Activated B cell treated with CpG ODN at 0.5 μM for 24 hours (primary cell): ENCODE measurements at regions of chr7 and their contacts with region 1.

Region 1: GRCh38 chr7:73851410-73852234 is 9.3 kb upstream of the METTL27 start:
- DNase-seq: no peak
- ATAC-seq: peak; percentile 60
- H3K4me3 Mint-ChIP-seq: no peak overlapping the region
- H3K27ac Mint-ChIP-seq: peak overlapping the region; percentile 20
- H3K4me1 Mint-ChIP-seq: peaks cover 12% of the 10 kb centered on the region
- H3K27me3 Mint-ChIP-seq: peaks cover 19% of the 10 kb centered on the region
- CTCF ChIP-seq: no peak

Region 2: DNA sequence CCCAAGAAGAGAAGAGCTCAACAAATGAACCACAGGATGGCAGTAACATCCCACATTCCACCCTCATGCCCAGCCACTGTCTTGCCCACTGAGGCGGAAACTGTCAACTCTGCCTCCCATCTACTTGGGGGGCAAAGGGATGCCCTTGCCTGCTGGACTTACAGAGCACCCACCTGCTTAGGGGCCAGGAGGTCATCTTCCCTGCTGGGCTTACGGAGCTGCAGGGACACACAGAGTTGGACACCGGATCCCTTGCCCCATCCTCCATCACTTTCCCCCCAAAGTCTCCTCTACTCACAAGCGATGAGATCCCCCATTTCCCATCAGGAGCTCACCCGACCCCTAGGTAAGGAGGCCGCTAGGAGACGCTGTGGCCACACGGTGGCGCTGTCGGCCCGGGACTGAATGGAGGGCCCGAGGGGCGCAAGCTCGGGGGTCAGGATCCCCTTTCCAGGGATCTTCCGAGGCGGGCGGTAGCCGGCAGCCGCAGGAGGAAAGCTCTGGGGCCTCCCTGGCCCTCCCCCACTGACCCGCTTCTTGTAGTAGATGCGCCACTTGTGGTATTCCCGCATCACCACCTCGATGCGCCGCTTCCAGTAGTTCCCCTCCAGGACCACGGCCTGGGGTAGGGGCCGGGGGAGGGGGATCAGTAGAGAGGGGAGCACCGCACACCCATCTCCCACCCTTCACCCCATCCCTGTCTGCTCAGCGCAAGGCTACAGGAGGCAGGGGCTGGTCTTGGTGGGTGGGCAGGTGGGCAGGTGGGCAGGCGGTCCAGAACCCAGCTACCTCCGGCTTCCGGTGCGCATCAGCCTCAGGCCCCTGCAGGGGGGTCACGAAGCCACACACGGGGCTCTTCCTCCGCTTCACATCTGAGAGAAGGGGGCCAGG is 244.6 kb before region 1 on chr7:
- CTCF ChIA-PET with region 1: interaction called, 7 read pairs
- POLR2A ChIA-PET with region 1: no interaction called
- intact Hi-C with region 1: loop called (anchors 1 kb)
- DNase-seq: peak; percentile 66
- ATAC-seq: peak; percentile 67
- H3K4me3 Mint-ChIP-seq: no peak overlapping the region
- H3K27ac Mint-ChIP-seq: no peak overlapping the region
- H3K4me1 Mint-ChIP-seq: peaks cover 1% of the 10 kb centered on the region
- H3K27me3 Mint-ChIP-seq: peaks cover 39% of the 10 kb centered on the region
- CTCF ChIP-seq: no peak

Region 3: DNA sequence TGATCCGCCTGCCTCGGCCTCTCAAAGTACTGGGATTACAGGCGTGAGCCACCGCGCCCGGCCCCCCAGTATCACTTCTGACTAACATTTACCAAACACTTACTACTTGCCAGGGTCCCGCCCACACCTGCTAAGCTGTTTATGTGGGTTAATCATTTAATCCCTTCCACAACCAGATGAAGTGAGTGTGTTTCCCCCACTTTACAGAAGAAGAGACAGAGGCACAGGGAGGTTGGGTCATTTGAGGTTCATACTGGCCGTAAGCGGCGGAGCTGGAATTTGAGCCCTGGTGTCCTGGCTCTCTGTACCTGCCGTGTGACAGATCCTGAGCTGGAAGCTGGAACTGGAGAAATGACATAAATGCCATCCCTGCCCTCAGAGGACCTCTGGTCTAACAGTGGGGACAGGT is 199.1 kb before region 1 on chr7:
- CTCF ChIA-PET with region 1: no interaction called
- POLR2A ChIA-PET with region 1: no interaction called
- intact Hi-C with region 1: no loop called
- DNase-seq: no peak
- ATAC-seq: no peak
- H3K4me3 Mint-ChIP-seq: no peak overlapping the region
- H3K27ac Mint-ChIP-seq: no peak overlapping the region
- H3K4me1 Mint-ChIP-seq: peaks cover 7% of the 10 kb centered on the region
- H3K27me3 Mint-ChIP-seq: peaks cover 41% of the 10 kb centered on the region
- CTCF ChIP-seq: no peak

Region 4: GRCh38 chr7:73811760-73812168 is 39.9 kb before region 1 on chr7:
- CTCF ChIA-PET with region 1: interaction called, 13 read pairs
- POLR2A ChIA-PET with region 1: no interaction called
- intact Hi-C with region 1: loop called (anchors 1 kb)
- DNase-seq: no peak
- ATAC-seq: peak; percentile 77
- H3K4me3 Mint-ChIP-seq: no peak overlapping the region
- H3K27ac Mint-ChIP-seq: no peak overlapping the region
- H3K4me1 Mint-ChIP-seq: no peaks in the 10 kb centered on the region
- H3K27me3 Mint-ChIP-seq: peaks cover 18% of the 10 kb centered on the region
- CTCF ChIP-seq: no peak

Region 5: DNA sequence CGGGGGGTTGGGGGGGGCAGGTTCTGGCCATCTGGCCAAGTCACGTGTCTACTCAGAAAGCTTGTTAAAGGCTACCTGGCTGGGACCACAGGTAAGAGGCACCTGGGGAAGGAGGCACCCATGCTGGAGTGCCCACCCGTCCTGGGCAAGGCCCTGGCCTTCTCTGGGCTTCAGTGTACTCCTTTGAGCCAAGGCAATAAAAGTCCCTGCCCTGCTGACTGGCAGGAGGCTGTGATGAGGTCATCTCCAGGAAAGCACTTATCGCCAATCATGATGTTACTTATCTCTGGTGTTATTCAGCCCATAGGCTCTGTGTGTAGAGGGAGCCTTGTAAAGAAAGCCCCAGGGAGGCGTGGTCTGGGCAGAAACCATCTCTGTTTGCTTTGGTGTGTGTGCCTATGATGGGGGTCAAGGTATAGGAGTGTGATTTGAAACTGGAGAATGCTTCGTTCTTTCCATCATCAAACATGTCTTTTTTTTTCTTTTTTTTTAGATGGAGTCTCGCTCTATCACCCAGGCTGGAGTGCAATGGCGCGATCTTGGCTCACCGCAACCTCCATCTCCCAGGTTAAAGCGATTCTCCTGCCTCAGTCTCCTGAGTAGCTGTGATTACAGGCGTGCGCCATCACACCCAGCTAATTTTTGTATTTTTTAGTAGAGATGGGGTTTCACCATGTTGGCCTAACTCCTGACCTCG is 23.4 kb before region 1 on chr7:
- CTCF ChIA-PET with region 1: interaction called, 4 read pairs
- POLR2A ChIA-PET with region 1: no interaction called
- intact Hi-C with region 1: loop called (anchors 2 kb)
- DNase-seq: no peak
- ATAC-seq: peak; percentile 50
- H3K4me3 Mint-ChIP-seq: no peak overlapping the region
- H3K27ac Mint-ChIP-seq: no peak overlapping the region
- H3K4me1 Mint-ChIP-seq: peaks cover 29% of the 10 kb centered on the region
- H3K27me3 Mint-ChIP-seq: peaks cover 1% of the 10 kb centered on the region
- CTCF ChIP-seq: no peak